PC-3 (cell line): ENCODE measurements at regions of chr3 and their contacts with region 1.

Region 1: DNA sequence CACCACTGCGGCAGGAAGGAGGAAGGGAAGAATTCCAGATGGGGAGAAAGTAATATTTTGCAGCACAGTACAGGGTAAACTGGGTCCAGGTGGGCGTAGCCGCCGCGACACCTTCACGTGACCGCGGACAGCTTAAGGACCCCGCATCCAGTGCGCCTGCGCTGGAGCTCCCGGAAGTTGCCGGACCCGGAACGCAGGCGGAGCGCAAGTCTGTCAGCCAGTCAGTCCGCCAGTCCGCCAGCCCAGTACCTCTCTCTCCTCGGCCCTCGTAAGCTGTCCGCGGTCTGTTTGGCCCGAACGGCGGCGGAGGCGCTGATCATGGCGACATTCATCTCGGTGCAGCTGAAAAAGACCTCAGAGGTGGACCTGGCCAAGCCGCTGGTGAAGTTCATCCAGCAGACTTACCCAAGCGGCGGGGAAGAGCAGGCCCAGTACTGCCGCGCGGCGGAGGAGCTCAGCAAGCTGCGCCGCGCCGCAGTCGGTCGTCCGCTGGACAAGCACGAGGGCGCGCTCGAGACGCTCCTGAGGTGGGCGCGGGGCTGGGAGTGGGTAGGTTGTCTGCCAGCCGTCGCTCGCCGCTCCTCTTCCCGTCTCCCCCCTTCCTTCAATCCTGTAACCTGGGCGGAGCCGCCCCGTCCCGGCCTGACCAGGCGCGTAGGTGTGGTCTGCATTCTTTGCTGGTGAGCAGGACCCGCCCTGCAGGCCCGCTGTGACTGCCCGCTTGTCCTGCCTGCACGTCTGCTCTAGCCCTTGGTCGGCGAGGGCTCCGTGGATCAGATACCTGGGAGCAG is at the start of gene PDCD6IP:
- DNase-seq: peak; percentile 97
- ATAC-seq: peak; percentile 90
- H3K4me3 ChIP-seq: peak within 1 kb of the TSS; percentile 84
- H3K27ac ChIP-seq: peak within 1 kb of the TSS; percentile 86
- H3K4me1 ChIP-seq: peaks cover 41% of the 10 kb centered on the region
- H3K27me3 ChIP-seq: no peaks in the 10 kb centered on the region
- CTCF ChIP-seq: no peak
- total RNA-seq, gene PDCD6IP: 185 and 266 TPM in 2 replicates

Region 2: DNA sequence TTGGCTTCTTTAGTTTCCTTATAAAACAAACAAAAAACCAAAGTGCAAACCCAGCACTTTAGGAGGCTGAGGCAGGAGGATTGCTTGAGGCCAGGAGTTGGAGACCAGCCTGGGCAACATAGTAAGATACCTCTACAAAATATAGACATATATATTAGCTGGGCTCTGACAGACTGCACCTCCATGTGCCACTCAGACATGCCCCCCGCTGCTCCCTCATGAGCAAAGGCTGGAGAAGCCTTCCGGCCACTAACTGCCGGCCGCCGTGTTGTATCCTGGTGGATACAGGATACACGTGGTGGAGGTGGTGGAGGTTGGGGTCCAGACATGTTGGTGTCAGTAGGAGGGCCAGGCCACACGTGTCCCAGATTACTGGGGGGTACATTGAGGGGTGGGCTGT is 876.5 kb before region 1 on chr3:
- CTCF ChIA-PET with region 1: no interaction called
- POLR2A ChIA-PET with region 1: interaction called, 10 read pairs
- intact Hi-C with region 1: no loop called
- DNase-seq: no peak
- ATAC-seq: no peak
- H3K4me3 ChIP-seq: no peak overlapping the region
- H3K27ac ChIP-seq: no peak overlapping the region
- H3K4me1 ChIP-seq: no peaks in the 10 kb centered on the region
- H3K27me3 ChIP-seq: no peaks in the 10 kb centered on the region
- CTCF ChIP-seq: no peak

Region 3: DNA sequence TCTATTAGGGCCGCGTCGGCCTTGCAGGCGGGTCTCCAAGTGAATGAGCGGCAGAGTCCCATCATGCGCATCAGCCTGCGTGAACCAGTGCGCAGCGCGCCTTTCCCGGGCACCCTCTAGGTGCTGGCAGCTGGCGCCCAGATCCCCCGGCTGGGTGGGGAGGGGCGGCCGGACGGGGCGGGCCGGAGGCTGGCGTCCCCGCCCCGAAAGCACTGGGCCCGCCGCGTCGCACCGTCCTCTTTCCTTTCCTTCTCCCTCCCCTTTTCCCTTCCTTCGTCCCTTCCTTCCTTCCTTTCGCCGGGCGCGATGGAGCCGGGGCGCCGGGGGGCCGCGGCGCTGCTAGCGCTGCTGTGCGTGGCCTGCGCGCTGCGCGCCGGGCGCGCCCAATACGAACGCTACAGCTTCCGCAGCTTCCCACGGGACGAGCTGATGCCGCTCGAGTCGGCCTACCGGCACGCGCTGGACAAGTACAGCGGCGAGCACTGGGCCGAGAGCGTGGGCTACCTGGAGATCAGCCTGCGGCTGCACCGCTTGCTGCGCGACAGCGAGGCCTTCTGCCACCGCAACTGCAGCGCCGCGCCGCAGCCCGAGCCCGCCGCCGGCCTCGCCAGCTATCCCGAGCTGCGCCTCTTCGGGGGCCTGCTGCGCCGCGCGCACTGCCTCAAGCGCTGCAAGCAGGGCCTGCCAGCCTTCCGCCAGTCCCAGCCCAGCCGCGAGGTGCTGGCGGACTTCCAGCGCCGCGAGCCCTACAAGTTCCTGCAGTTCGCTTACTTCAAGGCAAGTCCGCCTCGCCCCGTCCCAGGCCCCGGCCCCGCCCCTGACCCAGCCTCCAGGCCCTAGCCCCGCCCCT is 684.6 kb before region 1 on chr3 and contains the start of gene CRTAP:
- CTCF ChIA-PET with region 1: no interaction called
- POLR2A ChIA-PET with region 1: interaction called, 3 read pairs
- intact Hi-C with region 1: loop called (anchors 10 kb)
- DNase-seq: peak; percentile 93
- ATAC-seq: peak; percentile 81
- H3K4me3 ChIP-seq: peak within 1 kb of the TSS; percentile 74
- H3K27ac ChIP-seq: peak within 1 kb of the TSS; percentile 78
- H3K4me1 ChIP-seq: peaks cover 24% of the 10 kb centered on the region
- H3K27me3 ChIP-seq: no peaks in the 10 kb centered on the region
- CTCF ChIP-seq: no peak
- total RNA-seq, gene CRTAP: 174 and 184 TPM in 2 replicates

Region 4: GRCh38 chr3:33833408-33834095 is 34.9 kb after region 1 on chr3:
- CTCF ChIA-PET with region 1: no interaction called
- POLR2A ChIA-PET with region 1: no interaction called
- intact Hi-C with region 1: no loop called
- DNase-seq: no peak
- ATAC-seq: no peak
- H3K4me3 ChIP-seq: no peak overlapping the region
- H3K27ac ChIP-seq: no peak overlapping the region
- H3K4me1 ChIP-seq: peaks cover 4% of the 10 kb centered on the region; the same call in 1 of the 2 replicates
- H3K27me3 ChIP-seq: no peaks in the 10 kb centered on the region
- CTCF ChIP-seq: no peak

Region 5: GRCh38 chr3:34109846-34110245 is 311.2 kb after region 1 on chr3:
- CTCF ChIA-PET with region 1: no interaction called
- POLR2A ChIA-PET with region 1: no interaction called
- intact Hi-C with region 1: loop called (anchors 5 kb)
- DNase-seq: no peak
- ATAC-seq: no peak
- H3K4me3 ChIP-seq: no peak overlapping the region
- H3K27ac ChIP-seq: no peak overlapping the region
- H3K4me1 ChIP-seq: peaks cover 7% of the 10 kb centered on the region
- H3K27me3 ChIP-seq: no peaks in the 10 kb centered on the region
- CTCF ChIP-seq: no peak